Heart left ventricle (tissue), 16 donors: ENCODE measurements at regions of chr11 and their contacts with region 1.

Region 1: GRCh38 chr11:35605711-35606110 is 12.5 kb upstream of the FJX1 start:
- DNase-seq: peak in 4 of 5 donors; percentile 31 to 55 (median 34)
- ATAC-seq: peak; percentile 67 to 75 (median 68)
- H3K4me3 ChIP-seq: no peak overlapping the region
- H3K27ac ChIP-seq: no peak overlapping the region
- H3K4me1 ChIP-seq: peaks cover 0 to 11% (median 0%) of the 10 kb centered on the region in 12 donors
- H3K27me3 ChIP-seq: peaks cover 0 to 55% (median 6%) of the 10 kb centered on the region in 9 donors
- CTCF ChIP-seq: no peak
- POLR2A ChIP-seq: no peak

Region 2: DNA sequence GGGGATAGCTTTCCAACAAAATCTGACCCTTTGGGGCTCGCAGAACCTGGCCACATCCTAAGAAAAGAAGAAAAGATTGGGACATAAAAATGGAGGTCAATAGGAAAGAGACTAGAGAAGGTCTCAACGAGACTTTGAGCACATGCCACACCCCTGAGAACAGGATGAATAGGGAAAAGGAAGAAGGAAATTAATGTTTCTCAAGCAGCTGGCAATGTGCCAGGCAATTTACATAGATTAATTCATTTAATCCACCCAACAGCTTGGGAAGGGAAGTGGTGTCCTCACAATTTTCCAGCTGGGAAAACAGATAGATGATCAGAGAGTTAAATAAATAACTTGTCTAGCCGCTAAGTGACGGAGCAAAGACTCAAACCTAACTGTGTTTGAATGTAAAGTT is 131.0 kb before region 1 on chr11:
- intact Hi-C with region 1: no loop called
- DNase-seq: no peak
- ATAC-seq: no peak
- H3K4me3 ChIP-seq: no peak overlapping the region
- H3K27ac ChIP-seq: no peak overlapping the region
- H3K4me1 ChIP-seq: peaks cover 0 to 9% (median 0%) of the 10 kb centered on the region in 12 donors
- H3K27me3 ChIP-seq: peaks cover 0 to 10% (median 0%) of the 10 kb centered on the region in 9 donors
- CTCF ChIP-seq: no peak
- POLR2A ChIP-seq: no peak

Region 3: GRCh38 chr11:35491231-35491871 is 114.4 kb before region 1 on chr11:
- intact Hi-C with region 1: loop called in 2 of 10 experiments (anchors 10 kb)
- DNase-seq: no peak
- ATAC-seq: no peak
- H3K4me3 ChIP-seq: no peak overlapping the region
- H3K27ac ChIP-seq: no peak overlapping the region
- H3K4me1 ChIP-seq: peaks cover 0 to 14% (median 1%) of the 10 kb centered on the region in 12 donors
- H3K27me3 ChIP-seq: peaks cover 0 to 21% (median 0%) of the 10 kb centered on the region in 9 donors
- CTCF ChIP-seq: no peak
- POLR2A ChIP-seq: no peak

Region 4: DNA sequence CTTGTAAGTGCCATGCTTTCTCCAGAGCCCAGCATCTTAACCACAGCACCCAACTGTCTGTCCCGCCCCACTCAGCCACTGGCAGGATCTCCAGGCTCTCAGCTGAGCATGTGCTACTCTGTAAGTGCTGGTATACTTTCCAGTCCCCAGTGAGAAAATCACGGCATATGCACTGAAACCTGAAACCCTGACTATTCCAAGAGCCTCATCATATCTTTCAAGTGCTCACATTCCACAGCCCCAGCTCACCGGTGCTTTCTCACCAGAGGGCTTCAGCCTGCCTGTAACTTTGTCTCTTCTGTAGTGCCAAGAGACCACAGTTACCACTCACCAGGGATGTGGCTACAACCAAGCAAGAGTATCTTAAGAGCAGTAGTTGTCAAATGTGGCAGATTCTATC is 55.9 kb before region 1 on chr11:
- intact Hi-C with region 1: no loop called
- DNase-seq: no peak
- ATAC-seq: peak in 1 of 4 donors; percentile 49
- H3K4me3 ChIP-seq: no peak overlapping the region
- H3K27ac ChIP-seq: peak overlapping the region in 3 of 12 donors; percentile 6 to 29 (median 25)
- H3K4me1 ChIP-seq: peaks cover 0 to 14% (median 0%) of the 10 kb centered on the region in 12 donors
- H3K27me3 ChIP-seq: peaks cover 0 to 3% (median 0%) of the 10 kb centered on the region in 9 donors
- CTCF ChIP-seq: no peak
- POLR2A ChIP-seq: no peak

Region 5: DNA sequence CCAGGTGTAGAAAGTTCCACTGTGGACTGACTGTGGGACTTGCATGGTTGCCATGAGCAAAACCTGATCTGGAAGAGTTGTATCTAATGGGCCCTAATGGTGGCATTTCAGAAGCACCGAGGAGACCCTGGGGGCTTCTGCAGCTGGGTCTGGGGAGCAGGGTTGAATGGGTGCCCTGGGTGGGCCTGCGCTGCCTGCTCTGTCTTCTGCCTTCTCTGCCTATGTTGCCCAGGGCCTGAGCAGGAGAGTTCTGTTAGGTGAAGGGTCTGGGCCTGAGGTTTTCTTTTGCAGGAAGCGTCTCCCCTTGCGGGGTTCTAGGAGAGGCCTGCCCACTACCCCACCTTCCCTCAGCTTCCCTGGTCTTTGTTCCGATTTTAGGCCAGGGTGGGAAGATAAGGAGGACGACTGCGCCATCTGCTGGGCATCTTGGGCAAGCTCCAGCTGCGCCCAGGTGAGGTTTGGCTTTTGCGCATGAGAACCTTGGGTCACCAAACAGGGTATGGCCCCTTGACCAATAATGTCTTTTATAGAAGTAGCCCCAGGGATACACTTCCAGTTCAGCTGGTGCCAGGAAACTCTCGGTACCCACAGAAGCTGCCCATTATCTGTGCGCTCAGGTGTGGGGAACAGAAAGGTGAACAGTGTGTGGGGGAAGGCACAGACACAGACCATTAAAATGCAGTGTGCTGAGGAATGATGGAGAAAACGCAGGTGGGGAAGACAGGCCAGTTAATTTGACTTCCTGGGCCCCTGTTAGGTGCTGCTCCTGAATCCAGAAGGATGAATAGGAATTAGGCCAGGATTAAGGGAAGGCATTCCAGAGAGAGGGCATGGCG is 660.3 kb after region 1 on chr11:
- intact Hi-C with region 1: loop called in 2 of 10 experiments (anchors 5 kb)
- DNase-seq: peak; percentile 16 to 72 (median 44)
- ATAC-seq: peak; percentile 34 to 76 (median 72)
- H3K4me3 ChIP-seq: no peak overlapping the region
- H3K27ac ChIP-seq: no peak overlapping the region
- H3K4me1 ChIP-seq: peaks cover 0 to 3% (median 0%) of the 10 kb centered on the region in 12 donors
- H3K27me3 ChIP-seq: peaks cover 0 to 7% (median 0%) of the 10 kb centered on the region in 9 donors
- CTCF ChIP-seq: peak; percentile 63 to 84 (median 74)
- POLR2A ChIP-seq: no peak

Region 6: DNA sequence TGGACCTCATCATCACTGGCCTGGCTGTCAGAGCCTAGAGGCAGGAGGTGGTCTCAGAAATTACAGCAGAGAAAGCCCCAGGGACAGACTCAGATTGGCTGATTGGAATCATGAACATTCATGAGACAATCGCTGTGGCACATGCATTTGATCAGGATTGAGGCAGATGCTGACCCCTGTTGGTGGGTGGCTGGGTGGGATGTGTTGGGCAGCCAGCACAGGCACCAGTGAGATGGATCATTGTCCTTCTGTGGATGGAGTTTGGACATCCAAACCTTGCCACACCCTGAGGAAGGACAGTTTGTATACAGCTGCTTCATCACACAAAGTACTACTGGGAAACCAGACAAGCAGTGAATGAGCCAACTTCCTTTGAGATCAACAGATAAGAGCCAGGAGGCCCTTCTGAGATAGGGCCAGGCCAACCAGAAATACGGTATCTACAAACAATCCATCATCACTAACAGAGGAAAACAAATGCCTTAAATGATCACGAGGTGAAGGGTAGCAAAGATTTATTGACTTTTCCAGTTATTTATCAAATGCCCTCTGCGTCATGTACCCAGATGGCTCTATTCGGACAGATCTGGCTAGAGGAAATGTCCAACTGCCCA is 666.2 kb after region 1 on chr11:
- intact Hi-C with region 1: loop called in 1 of 10 experiments (anchors 5 kb)
- DNase-seq: no peak
- ATAC-seq: no peak
- H3K4me3 ChIP-seq: no peak overlapping the region
- H3K27ac ChIP-seq: no peak overlapping the region
- H3K4me1 ChIP-seq: no peaks in the 10 kb centered on the region
- H3K27me3 ChIP-seq: no peaks in the 10 kb centered on the region
- CTCF ChIP-seq: no peak
- POLR2A ChIP-seq: no peak